ENCODE measurements at regions of chr4 and their contacts with region 1.

Region 1: DNA sequence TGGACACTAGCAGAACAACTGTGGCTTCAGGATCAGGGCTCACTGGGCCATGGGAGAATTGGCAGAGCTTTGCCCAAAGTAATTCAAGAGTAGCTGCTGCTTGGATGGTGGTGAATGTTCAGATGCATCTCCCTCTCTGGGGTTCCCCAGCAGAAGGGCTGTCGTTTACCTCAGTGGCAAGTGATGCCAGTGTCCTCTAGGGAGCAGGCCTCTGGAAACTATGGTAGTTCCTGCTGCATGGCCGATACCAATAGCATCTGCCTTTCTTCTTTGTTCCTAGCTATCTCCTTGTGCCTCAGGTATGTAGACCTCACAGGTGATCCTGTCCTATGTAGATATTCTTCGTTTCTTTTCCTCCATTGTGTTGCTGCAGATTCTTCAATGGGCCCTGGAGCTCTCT is 26.4 kb downstream of the HMGB2 start:
- DNase-seq: no peak
- H3K4me3 ChIP-seq: no peak overlapping the region
- H3K27ac ChIP-seq: no peak overlapping the region
- H3K4me1 ChIP-seq: no peaks in the 10 kb centered on the region
- CTCF ChIP-seq: no peak

Region 2: GRCh38 chr4:173174594-173175012 is 133.2 kb before region 1 on chr4:
- CTCF ChIA-PET with region 1: no interaction called
- POLR2A ChIA-PET with region 1: interaction called, 14 read pairs
- intact Hi-C with region 1: no loop called
- DNase-seq: peak; percentile 26
- H3K4me3 ChIP-seq: no peak overlapping the region
- H3K27ac ChIP-seq: no peak overlapping the region
- H3K4me1 ChIP-seq: peaks cover 56% of the 10 kb centered on the region
- CTCF ChIP-seq: no peak

Region 3: DNA sequence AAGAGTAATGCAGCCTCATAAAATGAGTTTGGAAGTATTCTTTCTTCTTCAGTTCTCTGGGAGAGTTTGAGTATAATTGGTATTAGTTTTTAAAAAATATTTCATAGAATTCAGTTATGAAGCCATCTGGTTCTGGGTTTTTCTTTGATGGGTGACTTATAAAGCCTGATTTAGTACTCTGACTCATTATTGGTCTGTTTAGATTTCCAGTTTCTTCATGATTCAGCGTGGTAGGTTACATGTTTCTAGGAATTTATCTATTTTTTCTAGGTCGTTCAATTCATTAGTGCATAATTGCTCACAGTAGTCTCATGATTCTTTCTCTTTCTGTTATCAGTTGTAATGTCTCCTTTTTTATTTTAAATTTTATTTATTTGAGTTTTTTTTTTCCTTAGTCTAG is 1087.1 kb after region 1 on chr4:
- CTCF ChIA-PET with region 1: no interaction called
- POLR2A ChIA-PET with region 1: no interaction called
- intact Hi-C with region 1: no loop called
- DNase-seq: no peak
- H3K4me3 ChIP-seq: no peak overlapping the region
- H3K27ac ChIP-seq: no peak overlapping the region
- H3K4me1 ChIP-seq: no peaks in the 10 kb centered on the region
- CTCF ChIP-seq: no peak

Measured in OCI-LY7 (cell line).